ENCODE measurements at regions of chr10 and their contacts with region 1.

Region 1: GRCh38 chr10:110512461-110513187 is 14.9 kb downstream of the DUSP5 start:
- DNase-seq: no peak
- H3K4me3 ChIP-seq: no peak overlapping the region
- CTCF ChIP-seq: no peak

Region 2: GRCh38 chr10:110285501-110285900 is 227.1 kb before region 1 on chr10:
- CTCF ChIA-PET with region 1: no interaction called
- POLR2A ChIA-PET with region 1: no interaction called
- DNase-seq: no peak
- H3K4me3 ChIP-seq: no peak overlapping the region
- CTCF ChIP-seq: no peak

Region 3: DNA sequence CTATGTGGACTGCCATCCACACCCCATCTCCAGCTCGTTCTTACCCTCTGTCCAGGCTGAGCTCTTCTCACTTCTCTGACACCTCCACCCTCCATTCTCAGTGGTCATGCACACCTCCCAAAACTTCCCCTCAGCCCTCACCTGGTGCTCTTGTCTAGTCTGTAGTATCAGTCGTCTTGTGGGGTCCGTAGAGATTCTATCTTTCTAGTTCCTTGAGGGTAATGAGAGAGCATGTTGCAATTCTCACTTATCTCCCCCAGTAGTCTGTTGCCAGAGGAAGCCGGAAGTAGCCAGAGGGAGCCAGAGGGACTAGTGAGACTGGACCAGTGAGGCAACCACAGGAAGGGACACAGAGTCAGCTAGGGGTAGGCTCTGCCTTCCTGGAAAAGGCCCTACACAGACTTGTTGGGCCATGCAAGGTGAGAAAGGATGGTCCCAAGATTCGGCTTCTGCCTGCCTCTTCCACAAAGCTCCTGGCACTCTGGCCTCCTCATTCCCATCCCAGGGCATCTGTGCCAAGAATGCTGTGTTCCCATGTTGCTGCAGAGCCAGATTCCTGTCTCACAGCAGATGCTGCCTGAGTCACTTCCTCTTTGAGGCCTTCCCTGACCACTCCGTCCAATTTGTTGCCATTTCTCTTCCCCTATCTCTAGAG is 65.5 kb before region 1 on chr10:
- CTCF ChIA-PET with region 1: no interaction called
- POLR2A ChIA-PET with region 1: no interaction called
- DNase-seq: no peak
- H3K4me3 ChIP-seq: no peak overlapping the region
- CTCF ChIP-seq: no peak

Region 4: DNA sequence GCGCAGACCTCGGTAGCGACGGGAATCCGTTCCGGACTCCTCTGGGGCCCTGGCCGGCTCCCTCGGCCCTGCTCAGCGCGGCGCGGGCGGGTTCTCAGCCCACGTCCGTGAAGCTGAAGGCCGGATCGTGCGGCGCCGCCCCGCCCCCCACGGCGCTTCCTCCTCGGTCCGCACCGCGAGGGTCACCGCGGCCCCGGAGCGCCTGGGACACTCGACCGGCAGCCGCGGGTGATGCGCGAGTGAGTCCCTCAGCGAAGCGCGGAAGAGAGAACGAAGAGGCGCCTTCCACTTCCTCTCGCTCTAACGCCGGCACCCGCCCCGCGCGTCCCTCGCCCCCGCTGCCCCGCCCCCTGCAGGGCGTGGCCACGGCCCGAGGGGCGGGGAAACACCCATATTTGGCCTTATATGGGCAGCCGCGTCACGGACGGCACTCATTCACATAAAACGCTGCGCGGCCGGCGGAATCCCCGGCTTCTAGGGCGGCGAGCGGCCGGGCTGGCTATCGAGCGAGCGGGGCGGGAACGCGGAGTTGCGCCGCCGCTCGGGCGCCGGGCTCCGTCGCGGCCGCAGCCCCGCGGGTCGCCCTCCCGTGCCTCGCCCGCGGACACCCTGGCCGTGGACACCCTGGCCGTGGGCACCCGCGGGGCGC is 15.1 kb before region 1 on chr10 and contains the start of gene DUSP5:
- CTCF ChIA-PET with region 1: interaction called, 11 read pairs
- POLR2A ChIA-PET with region 1: interaction called, 16 read pairs
- DNase-seq: no peak
- H3K4me3 ChIP-seq: peak within 1 kb of the TSS; percentile 83
- CTCF ChIP-seq: no peak

Region 5: GRCh38 chr10:110758898-110759297 is 246.3 kb after region 1 on chr10:
- CTCF ChIA-PET with region 1: no interaction called
- POLR2A ChIA-PET with region 1: no interaction called
- DNase-seq: peak; percentile 9
- H3K4me3 ChIP-seq: no peak overlapping the region
- CTCF ChIP-seq: no peak

Region 6: DNA sequence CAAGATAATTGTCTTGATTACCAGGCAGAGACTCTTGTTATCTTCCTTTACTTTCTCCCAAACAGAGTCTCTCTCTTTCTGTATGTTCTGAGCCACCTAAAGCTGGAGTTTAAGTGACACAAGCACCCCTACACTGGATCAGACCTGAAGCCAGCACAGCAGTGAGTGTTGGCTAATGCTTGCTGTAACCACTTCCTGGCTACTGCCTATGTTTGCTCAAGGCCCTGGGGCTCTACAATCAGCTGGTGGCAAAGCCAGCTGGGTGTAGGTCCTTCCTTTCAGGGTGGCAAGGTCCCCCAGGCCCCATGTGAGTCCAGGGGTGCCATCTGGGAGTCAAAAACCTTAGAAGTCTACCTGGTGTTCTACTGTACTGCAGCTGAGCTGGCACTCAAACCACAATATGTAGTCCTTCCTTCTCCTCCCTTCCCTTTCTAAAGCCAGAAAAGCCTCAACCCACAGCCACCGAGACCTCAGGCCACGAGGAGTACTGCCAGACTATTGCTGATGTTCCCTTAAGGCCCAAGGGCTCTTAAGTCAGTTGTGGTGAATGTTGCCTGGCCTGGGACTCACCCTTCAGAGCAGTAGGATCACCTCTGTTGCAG is 980.5 kb after region 1 on chr10:
- CTCF ChIA-PET with region 1: no interaction called
- POLR2A ChIA-PET with region 1: no interaction called
- DNase-seq: no peak
- H3K4me3 ChIP-seq: no peak overlapping the region
- CTCF ChIP-seq: no peak